PC-3 (cell line): ENCODE measurements at regions of chr3 and their contacts with region 1.

Region 1: DNA sequence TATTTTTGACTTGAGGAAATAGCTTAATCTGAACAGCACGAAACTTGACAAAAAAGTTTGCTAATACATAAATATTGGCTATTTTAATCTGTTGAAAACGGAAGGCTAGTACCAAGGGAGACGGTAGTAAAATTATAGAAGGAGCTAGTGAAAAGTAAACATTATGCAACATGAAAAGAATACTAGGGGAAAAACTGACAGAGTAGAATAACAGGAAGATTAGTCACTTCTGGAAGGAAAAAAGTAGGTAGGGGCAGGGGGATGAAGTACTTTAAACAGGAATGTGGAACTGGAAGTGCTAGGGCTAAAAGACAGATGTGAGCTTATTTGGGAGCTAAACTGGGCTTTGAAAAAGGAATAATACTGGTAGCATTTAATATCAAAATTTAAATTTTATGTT is 60.1 kb downstream of the MBNL1 start:
- DNase-seq: peak; percentile 94
- ATAC-seq: peak; percentile 63
- H3K4me3 ChIP-seq: peak overlapping the region; percentile 52
- H3K27ac ChIP-seq: peak overlapping the region; percentile 93
- H3K4me1 ChIP-seq: peaks cover 58% of the 10 kb centered on the region
- H3K27me3 ChIP-seq: no peaks in the 10 kb centered on the region
- CTCF ChIP-seq: no peak

Region 2: DNA sequence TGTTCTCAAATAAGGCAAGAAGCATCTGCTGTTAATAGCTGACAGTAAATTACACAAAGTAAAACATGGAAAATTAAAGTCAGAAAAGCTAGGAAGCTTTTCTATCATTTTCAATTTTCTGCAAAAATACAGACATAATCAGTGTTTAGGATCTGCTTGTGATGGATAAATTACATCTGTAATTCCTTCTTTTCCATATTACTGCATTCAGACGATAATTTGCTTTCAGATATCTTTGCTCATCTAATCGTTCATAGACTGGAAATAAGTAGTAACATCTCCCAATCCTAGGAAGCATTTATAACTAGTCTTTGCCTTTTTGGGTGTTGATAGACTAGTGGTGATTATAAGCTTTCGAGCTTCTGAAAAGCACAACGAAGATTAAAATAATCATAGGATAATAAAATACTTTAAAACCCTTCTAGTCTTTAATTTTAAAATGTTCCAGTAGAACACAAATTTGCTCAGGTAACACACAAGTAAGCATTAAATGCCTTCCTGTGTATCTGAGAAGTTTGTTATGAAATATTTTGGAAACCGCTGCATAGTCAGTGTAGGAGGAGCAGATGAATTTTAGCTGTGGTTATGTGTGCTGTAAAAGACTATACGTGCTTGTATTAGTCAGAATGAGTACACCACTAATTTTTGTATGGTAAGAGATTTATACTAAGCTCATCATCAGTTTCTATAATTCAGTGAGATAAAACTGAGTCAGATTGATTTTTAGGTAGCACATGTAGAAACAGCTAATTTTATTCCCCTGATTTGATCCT is 19.1 kb before region 1 on chr3:
- CTCF ChIA-PET with region 1: interaction called, 3 read pairs
- POLR2A ChIA-PET with region 1: interaction called, 5 read pairs
- intact Hi-C with region 1: loop called (anchors 1 kb)
- DNase-seq: peak; percentile 81
- ATAC-seq: peak; percentile 46
- H3K4me3 ChIP-seq: no peak overlapping the region
- H3K27ac ChIP-seq: peak overlapping the region; percentile 97
- H3K4me1 ChIP-seq: peaks cover 59% of the 10 kb centered on the region
- H3K27me3 ChIP-seq: no peaks in the 10 kb centered on the region
- CTCF ChIP-seq: no peak

Region 3: GRCh38 chr3:152349392-152349791 is 20.6 kb after region 1 on chr3:
- CTCF ChIA-PET with region 1: no interaction called
- POLR2A ChIA-PET with region 1: no interaction called
- intact Hi-C with region 1: loop called (anchors 1 kb)
- DNase-seq: peak; percentile 71
- ATAC-seq: peak; percentile 55
- H3K4me3 ChIP-seq: peak overlapping the region; percentile 47
- H3K27ac ChIP-seq: peak overlapping the region; percentile 64
- H3K4me1 ChIP-seq: peaks cover 40% of the 10 kb centered on the region
- H3K27me3 ChIP-seq: no peaks in the 10 kb centered on the region
- CTCF ChIP-seq: no peak

Region 4: GRCh38 chr3:152382312-152383135 is 53.7 kb after region 1 on chr3:
- CTCF ChIA-PET with region 1: no interaction called
- POLR2A ChIA-PET with region 1: no interaction called
- intact Hi-C with region 1: no loop called
- DNase-seq: no peak
- ATAC-seq: no peak
- H3K4me3 ChIP-seq: no peak overlapping the region
- H3K27ac ChIP-seq: no peak overlapping the region
- H3K4me1 ChIP-seq: peaks cover 16% of the 10 kb centered on the region
- H3K27me3 ChIP-seq: no peaks in the 10 kb centered on the region
- CTCF ChIP-seq: no peak